IMR-90 (cell line): ENCODE measurements at regions of chr1 and their contacts with region 1.

Region 1: DNA sequence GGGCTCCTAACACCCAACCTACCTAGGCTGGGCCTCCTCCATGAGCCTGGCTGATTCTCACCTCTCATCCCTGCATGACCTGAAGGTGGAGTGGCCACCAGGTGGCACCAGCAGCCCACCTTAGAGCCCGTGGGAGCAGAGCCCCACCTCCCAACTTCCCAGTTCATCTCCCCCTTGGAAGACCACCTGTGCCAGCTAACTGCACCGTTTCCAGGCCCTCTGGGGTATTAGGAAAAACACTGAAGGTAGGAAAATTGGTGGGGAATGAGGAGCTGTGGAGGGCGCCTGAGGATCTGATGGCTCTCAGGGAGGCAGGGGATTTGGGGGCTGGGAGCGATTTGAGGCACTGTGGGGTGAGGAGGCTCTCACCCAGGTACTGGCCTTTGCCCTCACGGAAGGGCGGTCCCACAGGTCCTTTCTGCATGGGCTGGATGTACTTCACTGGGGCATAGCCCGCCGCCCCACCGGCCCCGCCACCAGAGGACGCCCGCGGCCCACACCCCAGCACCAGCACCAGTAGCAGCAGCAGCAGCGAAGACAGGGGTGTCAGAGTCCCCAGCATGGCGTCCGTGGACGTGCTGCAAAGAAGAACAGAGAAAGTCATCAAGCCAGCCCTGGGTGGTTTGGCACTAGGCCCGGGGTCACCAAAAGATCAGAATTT is 11.1 kb downstream of the ADPRS start:
- DNase-seq: peak; percentile 73
- ATAC-seq: peak; percentile 94
- H3K4me3 ChIP-seq: no peak overlapping the region
- H3K27ac ChIP-seq: no peak overlapping the region
- H3K4me1 ChIP-seq: no peaks in the 10 kb centered on the region
- H3K27me3 ChIP-seq: no peaks in the 10 kb centered on the region
- CTCF ChIP-seq: peak; percentile 92
- POLR2A ChIP-seq: no peak
- RAD21 ChIP-seq: peak; percentile 98

Region 2: GRCh38 chr1:36134505-36135329 is 34.9 kb after region 1 on chr1:
- CTCF ChIA-PET with region 1: interaction called, 11 read pairs
- POLR2A ChIA-PET with region 1: no interaction called
- dilution Hi-C with region 1: no loop called
- in situ Hi-C with region 1: no loop called
- intact Hi-C with region 1: loop called (anchors 1 kb)
- DNase-seq: peak; percentile 38
- ATAC-seq: peak; percentile 40
- H3K4me3 ChIP-seq: no peak overlapping the region
- H3K27ac ChIP-seq: no peak overlapping the region
- H3K4me1 ChIP-seq: peaks cover 26% of the 10 kb centered on the region
- H3K27me3 ChIP-seq: no peaks in the 10 kb centered on the region
- CTCF ChIP-seq: peak; percentile 64
- POLR2A ChIP-seq: no peak
- RAD21 ChIP-seq: peak; percentile 76

Region 3: GRCh38 chr1:36217670-36218069 is 117.9 kb after region 1 on chr1:
- CTCF ChIA-PET with region 1: no interaction called
- POLR2A ChIA-PET with region 1: no interaction called
- dilution Hi-C with region 1: no loop called
- in situ Hi-C with region 1: no loop called
- intact Hi-C with region 1: loop called (anchors 10 kb)
- DNase-seq: peak; percentile 48
- ATAC-seq: peak; percentile 76; the same call in 1 of the 2 replicates
- H3K4me3 ChIP-seq: no peak overlapping the region
- H3K27ac ChIP-seq: no peak overlapping the region
- H3K4me1 ChIP-seq: no peaks in the 10 kb centered on the region
- H3K27me3 ChIP-seq: no peaks in the 10 kb centered on the region
- CTCF ChIP-seq: peak; percentile 45
- POLR2A ChIP-seq: no peak
- RAD21 ChIP-seq: peak; percentile 51

Region 4: GRCh38 chr1:36285448-36286101 is 185.8 kb after region 1 on chr1:
- CTCF ChIA-PET with region 1: no interaction called
- POLR2A ChIA-PET with region 1: no interaction called
- dilution Hi-C with region 1: no loop called
- in situ Hi-C with region 1: loop called (anchors 5 kb)
- intact Hi-C with region 1: loop called (anchors 1 kb)
- DNase-seq: peak; percentile 92
- ATAC-seq: peak; percentile 97
- H3K4me3 ChIP-seq: no peak overlapping the region
- H3K27ac ChIP-seq: no peak overlapping the region
- H3K4me1 ChIP-seq: peaks cover 3% of the 10 kb centered on the region
- H3K27me3 ChIP-seq: no peaks in the 10 kb centered on the region
- CTCF ChIP-seq: peak; percentile 85
- POLR2A ChIP-seq: no peak
- RAD21 ChIP-seq: peak; percentile 85